Activated CD8-positive, alpha-beta T cell treated with anti-CD3 and anti-CD28 coated beads for 36 hours (primary cell): ENCODE measurements at regions of chr2 and their contacts with region 1.

Region 1: DNA sequence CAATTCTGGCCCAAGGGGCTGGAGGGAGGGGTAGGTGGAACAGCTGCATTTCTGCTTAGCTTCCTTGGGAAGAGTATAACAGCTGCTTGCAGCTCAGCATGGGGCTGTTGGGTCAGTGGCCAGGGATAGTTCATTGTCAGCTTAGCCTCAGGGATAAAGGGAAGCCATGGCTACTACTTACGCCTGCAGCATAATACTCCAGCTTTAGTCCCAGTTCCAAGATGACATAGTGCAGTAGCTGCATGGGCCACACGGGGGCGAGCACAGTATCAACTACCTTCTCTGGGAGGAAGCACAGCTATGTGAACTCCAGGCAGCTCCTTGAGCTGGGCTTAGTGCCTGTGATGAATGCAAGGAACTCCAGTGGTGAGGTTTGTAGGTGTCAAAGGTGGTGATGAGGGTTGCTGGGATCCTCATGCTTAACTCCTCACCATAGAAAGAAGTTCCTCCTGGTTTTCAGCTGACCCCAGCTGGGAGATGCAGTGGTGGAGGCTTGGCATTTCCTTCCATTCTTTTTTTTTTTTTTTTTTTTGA is 35.4 kb upstream of the RHOB start:
- DNase-seq: peak; percentile 89
- ATAC-seq: peak; percentile 100
- H3K4me3 Mint-ChIP-seq: no peak overlapping the region
- H3K27ac Mint-ChIP-seq: no peak overlapping the region
- H3K4me1 Mint-ChIP-seq: no peaks in the 10 kb centered on the region
- H3K27me3 Mint-ChIP-seq: peaks cover 9% of the 10 kb centered on the region
- CTCF ChIP-seq: peak; percentile 69

Region 2: DNA sequence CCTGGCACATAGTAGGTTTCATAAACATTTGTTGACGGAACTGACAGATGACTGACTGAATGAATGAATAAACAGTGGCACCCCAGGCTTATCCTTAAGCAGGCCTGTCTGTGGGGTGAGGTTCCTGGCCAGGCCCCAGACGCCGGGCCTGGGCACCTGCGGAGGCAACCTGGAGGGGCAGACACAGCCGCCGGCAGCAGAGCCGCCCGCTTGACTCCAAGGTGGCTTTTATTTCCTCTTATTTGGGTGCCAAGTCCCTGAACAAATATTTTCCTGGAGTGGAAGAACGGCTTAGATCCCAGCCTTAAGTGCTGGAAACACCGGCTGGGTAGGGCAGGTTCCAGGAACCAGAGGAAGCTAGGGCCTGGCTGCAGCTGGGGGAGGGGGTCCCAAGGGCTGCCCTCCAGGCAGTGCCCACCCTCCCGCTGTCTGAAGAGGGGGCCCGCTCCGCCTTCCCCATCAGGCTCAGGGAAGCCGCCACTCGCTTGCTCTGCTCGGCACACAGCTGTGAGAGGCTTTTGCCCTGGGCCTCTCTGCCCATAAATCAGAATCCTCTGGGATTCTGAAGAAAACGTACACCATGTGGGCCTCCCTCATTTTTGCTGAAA is 214.8 kb before region 1 on chr2:
- CTCF ChIA-PET with region 1: no interaction called
- POLR2A ChIA-PET with region 1: no interaction called
- intact Hi-C with region 1: no loop called
- DNase-seq: no peak
- ATAC-seq: no peak
- H3K4me3 Mint-ChIP-seq: no peak overlapping the region
- H3K27ac Mint-ChIP-seq: no peak overlapping the region
- H3K4me1 Mint-ChIP-seq: no peaks in the 10 kb centered on the region
- H3K27me3 Mint-ChIP-seq: no peaks in the 10 kb centered on the region
- CTCF ChIP-seq: no peak

Region 3: GRCh38 chr2:20378792-20379519 is 32.5 kb before region 1 on chr2:
- CTCF ChIA-PET with region 1: interaction called, 11 read pairs
- POLR2A ChIA-PET with region 1: no interaction called
- intact Hi-C with region 1: no loop called
- DNase-seq: no peak
- ATAC-seq: no peak
- H3K4me3 Mint-ChIP-seq: no peak overlapping the region
- H3K27ac Mint-ChIP-seq: no peak overlapping the region
- H3K4me1 Mint-ChIP-seq: no peaks in the 10 kb centered on the region
- H3K27me3 Mint-ChIP-seq: peaks cover 4% of the 10 kb centered on the region
- CTCF ChIP-seq: peak; percentile 22

Region 4: GRCh38 chr2:20424300-20425290 is 13.2 kb after region 1 on chr2:
- CTCF ChIA-PET with region 1: interaction called, 68 read pairs
- POLR2A ChIA-PET with region 1: interaction called, 3 read pairs
- intact Hi-C with region 1: no loop called
- DNase-seq: peak; percentile 41
- ATAC-seq: peak; percentile 63
- H3K4me3 Mint-ChIP-seq: no peak overlapping the region
- H3K27ac Mint-ChIP-seq: peak overlapping the region; percentile 17
- H3K4me1 Mint-ChIP-seq: peaks cover 14% of the 10 kb centered on the region
- H3K27me3 Mint-ChIP-seq: no peaks in the 10 kb centered on the region
- CTCF ChIP-seq: no peak

Region 5: DNA sequence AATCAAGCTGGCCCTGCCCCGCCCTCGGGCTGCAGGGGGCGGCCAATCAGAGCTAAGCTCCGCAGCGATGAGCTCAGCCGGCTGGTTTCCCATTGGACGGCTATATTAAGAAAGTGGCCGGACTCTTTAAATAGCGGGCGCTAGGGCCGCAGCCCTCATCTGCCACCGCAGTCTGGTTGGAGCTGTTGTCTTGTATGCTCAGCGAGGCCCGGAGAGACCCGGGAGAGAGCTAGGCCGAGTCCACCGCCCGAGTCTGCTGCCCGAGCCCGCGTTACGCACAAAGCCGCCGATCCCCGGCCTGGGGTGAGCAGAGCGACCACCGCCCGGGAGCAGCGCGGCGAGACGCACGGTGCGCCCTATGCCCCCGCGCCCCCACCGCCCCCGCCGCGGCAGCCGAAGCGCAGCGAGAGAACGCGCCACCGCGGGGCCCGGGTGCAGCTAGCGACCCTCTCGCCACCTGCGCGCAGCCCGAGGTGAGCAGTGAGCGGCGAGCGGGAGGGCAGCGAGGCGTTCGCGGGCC is 35.5 kb after region 1 on chr2 and contains the start of gene RHOB:
- CTCF ChIA-PET with region 1: interaction called, 17 read pairs
- POLR2A ChIA-PET with region 1: no interaction called
- intact Hi-C with region 1: no loop called
- DNase-seq: peak; percentile 95
- ATAC-seq: peak; percentile 99
- H3K4me3 Mint-ChIP-seq: peak within 1 kb of the TSS; percentile 80
- H3K27ac Mint-ChIP-seq: peak within 1 kb of the TSS; percentile 64
- H3K4me1 Mint-ChIP-seq: peaks cover 8% of the 10 kb centered on the region
- H3K27me3 Mint-ChIP-seq: peaks cover 4% of the 10 kb centered on the region
- CTCF ChIP-seq: no peak
- total RNA-seq, gene RHOB: 14.2 to 15.4 TPM

Region 6: GRCh38 chr2:20650880-20651730 is 239.7 kb after region 1 on chr2 and contains the start of gene HS1BP3:
- CTCF ChIA-PET with region 1: interaction called, 11 read pairs
- POLR2A ChIA-PET with region 1: no interaction called
- intact Hi-C with region 1: no loop called
- DNase-seq: peak; percentile 85
- ATAC-seq: peak; percentile 97
- H3K4me3 Mint-ChIP-seq: peak within 1 kb of the TSS; percentile 77
- H3K27ac Mint-ChIP-seq: peak within 1 kb of the TSS; percentile 85
- H3K4me1 Mint-ChIP-seq: peaks cover 17% of the 10 kb centered on the region
- H3K27me3 Mint-ChIP-seq: no peaks in the 10 kb centered on the region
- CTCF ChIP-seq: peak; percentile 83
- total RNA-seq, gene HS1BP3: 6.5 to 7.9 TPM

Region 7: GRCh38 chr2:20916604-20917286 is 505.3 kb after region 1 on chr2:
- CTCF ChIA-PET with region 1: no interaction called
- POLR2A ChIA-PET with region 1: no interaction called
- intact Hi-C with region 1: no loop called
- DNase-seq: no peak
- ATAC-seq: no peak
- H3K4me3 Mint-ChIP-seq: no peak overlapping the region
- H3K27ac Mint-ChIP-seq: no peak overlapping the region
- H3K4me1 Mint-ChIP-seq: no peaks in the 10 kb centered on the region
- H3K27me3 Mint-ChIP-seq: peaks cover 20% of the 10 kb centered on the region
- CTCF ChIP-seq: no peak